ENCODE measurements at regions of chr15 and their contacts with region 1.

Region 1: DNA sequence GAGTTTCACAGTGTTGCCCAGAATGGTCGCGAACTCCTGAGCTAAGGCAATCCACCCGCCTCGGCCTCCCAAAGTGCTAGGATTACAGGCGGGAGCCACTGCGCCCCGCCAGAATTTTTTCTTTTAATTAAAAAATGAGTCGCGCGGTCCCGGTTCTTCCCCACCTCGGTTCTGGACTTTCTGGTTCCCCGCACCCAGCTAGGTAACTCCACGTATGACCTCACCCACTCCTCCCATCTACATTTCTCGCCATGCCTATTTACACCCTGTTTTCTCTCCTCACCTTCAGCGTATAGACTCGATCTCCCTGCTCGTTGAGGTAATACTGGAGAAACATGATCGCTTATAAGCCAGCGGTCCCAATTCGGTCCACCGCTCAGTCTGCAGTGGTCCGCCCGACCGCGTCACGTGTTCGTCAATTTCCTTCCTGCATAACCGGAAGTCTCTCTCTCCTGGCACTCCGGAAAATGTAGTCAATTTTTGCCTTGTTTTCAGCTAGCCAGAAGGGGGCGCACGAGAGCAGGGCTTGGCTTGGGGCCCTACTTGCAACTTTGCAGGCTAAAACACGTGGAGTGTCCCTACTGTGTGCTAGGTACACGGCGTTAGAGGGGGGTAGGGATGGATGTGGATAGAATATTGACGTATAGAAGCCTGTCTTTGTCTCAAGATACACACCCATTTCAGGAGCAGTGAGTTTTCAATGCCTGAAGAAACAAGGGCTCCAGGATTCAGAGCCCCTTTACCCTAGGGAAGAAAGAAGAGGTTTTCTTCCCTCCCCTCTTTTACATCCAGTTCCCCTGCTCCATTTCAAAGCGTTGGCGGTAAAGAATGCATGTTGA is at the starts of genes NOP10 and NUTM1:
- DNase-seq: peak; percentile 97
- H3K4me3 ChIP-seq: peak within 1 kb of the TSS; percentile 65 to 87 (median 75)
- H3K27ac ChIP-seq: peak within 1 kb of the TSS; percentile 79 to 96 (median 94)
- H3K4me1 ChIP-seq: peaks cover 6 to 49% (median 43%) of the 10 kb centered on the region in 6 donors
- H3K27me3 ChIP-seq: no peaks in the 10 kb centered on the region
- CTCF ChIP-seq: peak; percentile 84 to 98 (median 93)
- POLR2A ChIP-seq: peak; percentile 22 to 66 (median 32)
- total RNA-seq, gene NOP10: 100.0 to 147 (median 132) TPM
- total RNA-seq, gene NUTM1: not detected

Region 2: GRCh38 chr15:34065941-34066340 is 277.0 kb before region 1 on chr15:
- intact Hi-C with region 1: no loop called
- DNase-seq: no peak
- H3K4me3 ChIP-seq: no peak overlapping the region
- H3K27ac ChIP-seq: no peak overlapping the region
- H3K4me1 ChIP-seq: peaks cover 0 to 7% (median 5%) of the 10 kb centered on the region in 6 donors
- H3K27me3 ChIP-seq: no peaks in the 10 kb centered on the region
- CTCF ChIP-seq: no peak
- POLR2A ChIP-seq: no peak

Region 3: GRCh38 chr15:34587717-34588674 is 245.0 kb after region 1 on chr15:
- intact Hi-C with region 1: loop called (anchors 10 kb)
- DNase-seq: peak; percentile 66
- H3K4me3 ChIP-seq: peak overlapping the region in 2 of 8 donors; percentile 22 to 53
- H3K27ac ChIP-seq: peak overlapping the region in 4 of 8 donors; percentile 10 to 57 (median 20)
- H3K4me1 ChIP-seq: peaks cover 0 to 19% (median 11%) of the 10 kb centered on the region in 6 donors
- H3K27me3 ChIP-seq: peaks cover 0 to 14% (median 0%) of the 10 kb centered on the region in 7 donors
- CTCF ChIP-seq: peak; percentile 35 to 81 (median 79)
- POLR2A ChIP-seq: no peak

Measured in spleen (tissue), 13 donors.